Posterior vena cava (tissue), 2 donors: ENCODE measurements at regions of chr1 and their contacts with region 1.

Region 1: GRCh38 chr1:42240966-42241755 is 76.6 kb upstream of the GUCA2A start:
- DNase-seq: no peak

Region 2: DNA sequence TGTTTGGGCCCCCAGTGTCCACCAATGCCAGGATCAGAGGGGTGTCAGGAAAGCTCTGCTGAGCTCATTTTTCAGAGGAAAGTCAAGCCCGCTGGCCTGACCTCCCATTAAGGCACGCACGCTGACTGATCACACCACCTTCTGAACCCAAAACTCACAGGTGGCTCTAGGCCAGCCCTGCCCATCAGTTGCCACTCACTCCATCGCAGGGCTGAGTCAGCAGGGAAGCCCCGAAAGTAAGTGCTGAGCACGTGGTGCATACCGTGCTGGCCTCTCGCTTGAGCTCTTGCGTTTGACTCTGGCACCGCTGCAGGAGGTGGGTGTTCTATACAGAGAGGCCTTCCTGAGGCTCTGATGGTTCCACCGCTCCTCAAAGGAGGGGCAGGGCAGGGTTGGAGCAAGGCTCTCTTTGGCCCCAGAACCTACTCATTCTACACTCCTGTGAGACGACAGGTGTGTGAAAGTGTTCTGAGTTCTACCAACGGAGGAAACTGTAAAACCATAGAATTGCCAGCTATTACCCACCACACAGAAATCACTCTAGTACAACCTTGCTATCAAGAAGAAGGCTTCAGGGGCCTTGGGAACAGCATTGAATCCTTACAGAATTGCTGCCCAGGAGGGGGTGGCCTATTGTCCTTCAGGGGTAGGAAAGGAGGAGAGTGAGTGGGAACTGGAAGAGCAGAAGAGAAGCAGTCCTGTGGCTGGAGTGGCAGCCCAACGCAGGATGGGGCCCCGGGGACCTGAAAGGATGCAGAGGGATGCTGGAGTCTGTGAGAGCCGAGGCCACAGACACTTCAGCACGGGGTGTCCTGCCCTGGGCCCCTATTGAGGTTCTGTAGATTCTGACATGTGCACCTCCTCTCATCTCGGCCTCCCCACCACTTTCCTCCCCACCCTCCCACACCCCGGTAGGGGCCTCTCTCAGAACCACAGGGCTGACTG is 542.0 kb before region 1 on chr1:
- intact Hi-C with region 1: no loop called
- DNase-seq: peak; percentile 61

Region 3: DNA sequence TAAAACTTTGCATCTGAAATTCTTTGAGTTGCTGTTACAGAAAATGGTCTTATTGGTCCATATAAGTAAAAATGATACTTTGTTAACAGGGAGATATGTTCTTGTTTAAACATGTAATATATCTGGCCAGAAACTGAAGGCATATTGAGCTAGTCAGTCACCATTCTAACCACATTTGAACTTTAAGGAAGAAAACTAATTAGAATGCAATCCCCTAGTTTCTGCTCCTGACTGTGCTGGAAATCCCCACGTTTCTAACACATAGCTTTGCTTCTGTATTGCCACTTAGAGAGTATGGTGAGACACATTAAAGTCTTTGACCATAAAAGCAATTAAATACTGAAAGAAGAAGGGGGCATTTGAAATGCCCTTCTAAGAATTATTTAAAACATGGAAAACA is 290.3 kb before region 1 on chr1:
- intact Hi-C with region 1: no loop called
- DNase-seq: no peak

Region 4: GRCh38 chr1:42319128-42319851 is 78.1 kb after region 1 on chr1:
- intact Hi-C with region 1: loop called in 1 of 2 experiments (anchors 2 kb)
- DNase-seq: no peak